ENCODE measurements at regions of chr10 and their contacts with region 1.

Region 1: DNA sequence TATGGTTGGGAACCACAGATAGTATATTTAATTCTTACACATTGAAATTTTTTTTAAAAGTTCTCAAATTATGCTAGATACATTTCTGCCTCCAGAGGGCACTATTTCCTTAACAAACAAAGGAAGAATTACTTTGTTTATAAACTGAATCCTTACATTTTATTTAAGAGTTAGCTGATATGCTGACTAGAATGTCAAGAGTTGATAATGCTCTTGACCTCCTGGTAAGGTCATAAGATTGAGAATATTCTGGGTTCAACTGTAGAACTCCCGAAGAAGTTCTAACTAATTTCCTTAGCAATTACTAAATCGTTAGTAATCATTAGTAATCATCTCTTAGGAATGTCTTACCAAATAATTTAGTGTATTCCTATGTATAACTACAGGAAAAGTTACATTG is 95.3 kb upstream of the CYP26C1 start:
- DNase-seq: peak in 1 of 35 experiments; percentile 51
- ATAC-seq: no peak
- H3K4me3 ChIP-seq: no peak overlapping the region
- H3K4me3 Mint-ChIP-seq: no peak overlapping the region
- H3K27ac ChIP-seq: no peak overlapping the region
- H3K27ac Mint-ChIP-seq: no peak overlapping the region
- H3K4me1 ChIP-seq: no peaks in the 10 kb centered on the region
- H3K4me1 Mint-ChIP-seq: no peaks in the 10 kb centered on the region
- H3K27me3 ChIP-seq: no peaks in the 10 kb centered on the region
- H3K27me3 Mint-ChIP-seq: no peaks in the 10 kb centered on the region

Region 2: DNA sequence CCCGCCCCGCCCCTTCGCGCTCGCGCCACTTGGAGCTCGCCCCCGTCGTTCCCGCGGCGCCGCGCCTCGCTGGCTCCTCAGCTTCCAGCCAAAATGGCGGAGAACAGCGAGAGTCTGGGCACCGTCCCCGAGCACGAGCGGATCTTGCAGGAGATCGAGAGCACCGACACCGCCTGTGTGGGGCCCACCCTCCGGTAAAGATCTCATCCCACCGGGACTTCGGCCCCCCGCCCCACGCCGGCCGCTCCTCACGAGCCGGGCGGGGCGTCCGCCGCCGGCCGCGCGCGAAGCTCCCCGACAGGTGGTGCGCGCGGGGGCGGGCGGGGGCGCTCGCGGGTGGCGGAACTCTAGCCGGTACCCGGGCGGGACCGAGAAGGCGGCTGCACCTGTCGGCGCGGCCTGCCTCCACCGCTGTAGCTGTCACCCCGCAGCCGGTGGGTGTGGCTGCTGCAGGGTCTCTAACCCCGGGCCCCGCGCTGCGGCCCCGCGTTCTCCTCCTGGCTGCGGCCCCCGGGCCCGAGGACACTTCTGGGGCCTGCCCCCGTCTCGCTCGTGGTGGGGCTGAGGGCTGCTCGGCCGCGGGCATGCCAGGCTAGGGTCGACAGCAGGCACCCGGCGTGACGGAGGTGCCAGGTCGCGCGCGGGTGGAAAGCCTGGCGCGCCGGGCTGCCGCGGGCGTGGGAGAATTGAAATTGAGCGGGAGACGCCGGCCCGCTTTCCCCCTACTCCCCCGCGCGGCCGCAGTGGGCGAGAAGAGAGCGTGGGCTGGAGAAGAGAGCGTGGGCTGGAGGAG is 116.7 kb before region 1 on chr10 and contains the start of gene EXOC6:
- CTCF ChIA-PET with region 1: no interaction called
- POLR2A ChIA-PET with region 1: no interaction called
- DNase-seq: peak; percentile 77 to 94 (median 85)
- ATAC-seq: peak; percentile 89 to 91 (median 90)
- H3K4me3 ChIP-seq: peak within 1 kb of the TSS; percentile 58 to 69
- H3K4me3 Mint-ChIP-seq: peak within 1 kb of the TSS; percentile 84 to 90 (median 84)
- H3K27ac ChIP-seq: peak within 1 kb of the TSS; percentile 87
- H3K27ac Mint-ChIP-seq: peak within 1 kb of the TSS; percentile 85 to 91
- H3K4me1 ChIP-seq: peaks cover 9 to 12% of the 10 kb centered on the region in 2 experiments
- H3K4me1 Mint-ChIP-seq: peaks cover 23 to 43% (median 32%) of the 10 kb centered on the region in 3 donors
- H3K27me3 ChIP-seq: no peaks in the 10 kb centered on the region
- H3K27me3 Mint-ChIP-seq: no peaks in the 10 kb centered on the region
- total RNA-seq, gene EXOC6: 8.7 to 13.3 (median 9.7) TPM

Region 3: GRCh38 chr10:92891885-92892704 is 73.2 kb before region 1 on chr10:
- CTCF ChIA-PET with region 1: interaction called in 1 of 2 experiments, 10 read pairs
- POLR2A ChIA-PET with region 1: no interaction called
- DNase-seq: no peak
- ATAC-seq: no peak
- H3K4me3 ChIP-seq: no peak overlapping the region
- H3K4me3 Mint-ChIP-seq: no peak overlapping the region
- H3K27ac ChIP-seq: no peak overlapping the region
- H3K27ac Mint-ChIP-seq: no peak overlapping the region
- H3K4me1 ChIP-seq: no peaks in the 10 kb centered on the region
- H3K4me1 Mint-ChIP-seq: peaks cover 16 to 18% (median 17%) of the 10 kb centered on the region in 3 donors
- H3K27me3 ChIP-seq: no peaks in the 10 kb centered on the region
- H3K27me3 Mint-ChIP-seq: no peaks in the 10 kb centered on the region

Measured in T-cell (primary cell).